Gastrocnemius medialis (tissue), 4 donors: ENCODE measurements at regions of chr22 and their contacts with region 1.

Region 1: GRCh38 chr22:28019881-28020871 is 101.1 kb upstream of the PITPNB start:
- DNase-seq: peak; percentile 75 to 82
- ATAC-seq: peak; percentile 59 to 61
- H3K4me3 ChIP-seq: no peak overlapping the region
- H3K27ac ChIP-seq: peak overlapping the region; percentile 92 to 94 (median 94)
- H3K4me1 ChIP-seq: peaks cover 52 to 58% of the 10 kb centered on the region in 2 donors
- H3K27me3 ChIP-seq: no peaks in the 10 kb centered on the region
- CTCF ChIP-seq: peak; percentile 95 to 99 (median 98)
- POLR2A ChIP-seq: no peak

Region 2: DNA sequence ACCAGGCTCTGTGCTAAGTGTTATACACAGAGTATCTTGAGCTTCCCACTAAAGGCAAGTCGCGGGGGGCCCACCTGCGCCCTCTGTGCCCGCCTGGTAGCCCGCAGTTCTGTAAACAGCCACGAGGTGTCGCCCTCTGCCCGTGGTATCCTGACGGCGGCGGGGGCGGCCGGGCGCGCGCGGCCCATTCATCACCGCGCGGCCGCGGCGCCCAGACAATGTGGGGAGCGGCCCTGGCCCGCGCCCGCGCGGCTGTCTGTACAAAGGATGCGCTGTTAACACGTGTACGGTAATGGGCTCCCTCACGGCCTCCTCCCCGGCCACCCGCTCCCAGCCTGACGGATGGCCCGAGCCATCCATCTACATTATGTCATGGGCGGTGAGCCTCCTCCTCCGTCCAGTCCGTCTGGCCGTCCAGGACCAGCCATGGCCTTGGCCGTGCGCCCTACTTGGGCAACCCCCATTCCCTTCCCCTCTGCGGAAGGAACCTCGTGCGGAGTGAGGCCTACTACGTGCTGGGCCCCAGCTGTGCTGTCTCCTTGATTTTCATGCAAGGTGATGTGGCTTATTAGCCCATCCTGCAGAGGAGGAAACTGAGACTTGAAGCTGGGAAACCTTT is 1263.4 kb before region 1 on chr22:
- in situ Hi-C with region 1: no loop called
- intact Hi-C with region 1: loop called (anchors 10 kb)
- DNase-seq: no peak
- ATAC-seq: peak; percentile 33 to 70
- H3K4me3 ChIP-seq: peak overlapping the region in 1 of 4 donors; percentile 32
- H3K27ac ChIP-seq: no peak overlapping the region
- H3K4me1 ChIP-seq: peaks cover 0 to 3% of the 10 kb centered on the region in 2 donors
- H3K27me3 ChIP-seq: no peaks in the 10 kb centered on the region
- CTCF ChIP-seq: peak; percentile 79 to 95 (median 88)
- POLR2A ChIP-seq: no peak

Region 3: GRCh38 chr22:27632451-27633295 is 387.5 kb before region 1 on chr22:
- in situ Hi-C with region 1: no loop called
- intact Hi-C with region 1: loop called (anchors 10 kb)
- DNase-seq: no peak
- ATAC-seq: no peak
- H3K4me3 ChIP-seq: no peak overlapping the region
- H3K27ac ChIP-seq: no peak overlapping the region
- H3K4me1 ChIP-seq: peaks cover 11 to 15% of the 10 kb centered on the region in 2 donors
- H3K27me3 ChIP-seq: no peaks in the 10 kb centered on the region
- CTCF ChIP-seq: no peak
- POLR2A ChIP-seq: no peak

Region 4: DNA sequence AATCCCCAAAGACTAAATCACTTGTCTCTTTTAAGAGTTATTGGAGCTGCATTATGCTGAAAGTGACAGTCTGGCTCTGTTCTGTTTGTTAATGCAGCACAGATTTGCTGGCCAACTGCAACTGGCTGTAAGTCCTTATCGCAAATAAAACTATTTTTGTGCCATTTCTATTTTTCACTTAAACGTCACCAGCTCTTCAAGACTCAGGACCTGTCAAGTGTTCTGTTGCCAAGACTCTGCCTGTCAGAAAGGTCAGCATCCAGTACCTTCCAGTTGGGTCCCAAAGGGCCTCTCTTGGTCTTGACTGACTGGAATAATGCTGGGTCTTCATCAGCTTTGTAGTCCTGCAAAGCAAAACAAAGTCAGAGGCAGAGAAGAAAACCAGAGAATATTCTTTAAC is 146.7 kb before region 1 on chr22:
- in situ Hi-C with region 1: no loop called
- intact Hi-C with region 1: loop called (anchors 5 kb)
- DNase-seq: no peak
- ATAC-seq: no peak
- H3K4me3 ChIP-seq: no peak overlapping the region
- H3K27ac ChIP-seq: peak overlapping the region; percentile 0 to 80 (median 34)
- H3K4me1 ChIP-seq: peaks cover 20 to 36% of the 10 kb centered on the region in 2 donors
- H3K27me3 ChIP-seq: no peaks in the 10 kb centered on the region
- CTCF ChIP-seq: no peak
- POLR2A ChIP-seq: no peak

Region 5: GRCh38 chr22:28034760-28035401 is 14.7 kb after region 1 on chr22:
- in situ Hi-C with region 1: no loop called
- intact Hi-C with region 1: loop called (anchors 2 kb)
- DNase-seq: peak; percentile 97 to 99
- ATAC-seq: peak; percentile 96 to 97
- H3K4me3 ChIP-seq: peak overlapping the region; percentile 12 to 43 (median 25)
- H3K27ac ChIP-seq: peak overlapping the region; percentile 93 to 98 (median 94)
- H3K4me1 ChIP-seq: peaks cover 43 to 46% of the 10 kb centered on the region in 2 donors
- H3K27me3 ChIP-seq: no peaks in the 10 kb centered on the region
- CTCF ChIP-seq: no peak
- POLR2A ChIP-seq: peak; percentile 49 to 56

Region 6: DNA sequence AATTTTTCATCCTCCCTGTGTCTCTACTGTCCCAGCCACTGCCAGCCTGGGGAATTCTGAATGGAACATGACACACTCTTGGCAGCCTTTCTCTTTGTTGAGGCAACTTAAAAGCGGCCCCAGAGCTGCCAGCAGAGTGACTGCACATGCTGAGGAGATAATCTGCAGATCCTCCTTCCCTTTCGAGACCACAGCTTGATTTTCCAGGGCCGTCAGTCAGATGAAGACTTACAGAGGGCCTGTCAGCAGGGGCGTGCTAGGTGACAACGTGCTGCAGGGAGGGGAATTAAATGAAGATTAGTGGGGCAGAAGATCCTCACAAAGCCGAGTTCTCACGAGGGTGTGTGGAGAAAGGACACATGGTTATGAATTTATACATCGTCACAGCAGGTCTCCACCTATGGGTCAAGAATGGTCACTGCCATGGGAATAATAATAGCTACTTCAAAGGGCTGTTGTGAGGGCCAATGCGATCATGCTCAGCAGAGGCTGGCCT is 92.4 kb after region 1 on chr22:
- in situ Hi-C with region 1: loop called in 1 of 4 experiments (anchors 10 kb)
- intact Hi-C with region 1: loop called (anchors 1 kb)
- DNase-seq: peak; percentile 49 to 70
- ATAC-seq: peak; percentile 91 to 92
- H3K4me3 ChIP-seq: peak overlapping the region; percentile 11 to 53 (median 28)
- H3K27ac ChIP-seq: peak overlapping the region; percentile 68 to 78 (median 71)
- H3K4me1 ChIP-seq: peaks cover 11 to 23% of the 10 kb centered on the region in 2 donors
- H3K27me3 ChIP-seq: no peaks in the 10 kb centered on the region
- CTCF ChIP-seq: peak; percentile 22 to 59 (median 53)
- POLR2A ChIP-seq: no peak

Region 7: DNA sequence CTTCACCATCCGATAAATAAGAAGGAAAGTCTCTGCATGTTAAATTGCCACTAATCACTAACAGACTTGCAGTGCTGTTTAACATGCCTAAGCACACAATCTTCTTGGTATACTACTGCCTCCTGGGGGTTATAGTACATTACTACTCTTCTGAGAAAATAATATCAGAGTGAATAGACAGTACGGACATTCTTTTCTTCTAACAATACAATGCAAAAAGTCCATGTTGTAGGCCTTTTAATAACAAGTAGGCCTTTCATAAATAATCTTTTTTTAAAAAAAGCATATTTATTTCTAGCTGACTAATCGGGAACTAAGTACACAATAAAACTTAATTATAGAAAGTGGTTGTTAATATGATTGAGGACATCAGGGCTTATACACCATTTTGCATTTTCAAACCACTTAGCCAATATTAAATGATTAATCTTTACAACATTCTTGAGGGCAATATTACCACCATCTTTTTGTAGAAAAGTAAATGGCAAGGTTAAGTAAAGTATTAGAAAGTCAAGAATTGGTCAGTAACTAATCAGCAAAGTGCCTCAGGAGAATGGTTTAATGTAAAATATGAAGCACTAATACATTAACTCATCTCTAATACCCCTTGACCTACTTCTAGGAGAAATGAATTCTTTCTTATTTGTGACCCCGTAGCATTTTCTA is 574.8 kb after region 1 on chr22:
- in situ Hi-C with region 1: no loop called
- intact Hi-C with region 1: loop called (anchors 10 kb)
- DNase-seq: no peak
- ATAC-seq: peak; percentile 83 to 97
- H3K4me3 ChIP-seq: no peak overlapping the region
- H3K27ac ChIP-seq: no peak overlapping the region
- H3K4me1 ChIP-seq: no peaks in the 10 kb centered on the region
- H3K27me3 ChIP-seq: no peaks in the 10 kb centered on the region
- CTCF ChIP-seq: peak; percentile 68 to 89 (median 71)
- POLR2A ChIP-seq: no peak